CD8-positive, alpha-beta T cell (primary cell): ENCODE measurements at regions of chr5 and their contacts with region 1.

Region 1: DNA sequence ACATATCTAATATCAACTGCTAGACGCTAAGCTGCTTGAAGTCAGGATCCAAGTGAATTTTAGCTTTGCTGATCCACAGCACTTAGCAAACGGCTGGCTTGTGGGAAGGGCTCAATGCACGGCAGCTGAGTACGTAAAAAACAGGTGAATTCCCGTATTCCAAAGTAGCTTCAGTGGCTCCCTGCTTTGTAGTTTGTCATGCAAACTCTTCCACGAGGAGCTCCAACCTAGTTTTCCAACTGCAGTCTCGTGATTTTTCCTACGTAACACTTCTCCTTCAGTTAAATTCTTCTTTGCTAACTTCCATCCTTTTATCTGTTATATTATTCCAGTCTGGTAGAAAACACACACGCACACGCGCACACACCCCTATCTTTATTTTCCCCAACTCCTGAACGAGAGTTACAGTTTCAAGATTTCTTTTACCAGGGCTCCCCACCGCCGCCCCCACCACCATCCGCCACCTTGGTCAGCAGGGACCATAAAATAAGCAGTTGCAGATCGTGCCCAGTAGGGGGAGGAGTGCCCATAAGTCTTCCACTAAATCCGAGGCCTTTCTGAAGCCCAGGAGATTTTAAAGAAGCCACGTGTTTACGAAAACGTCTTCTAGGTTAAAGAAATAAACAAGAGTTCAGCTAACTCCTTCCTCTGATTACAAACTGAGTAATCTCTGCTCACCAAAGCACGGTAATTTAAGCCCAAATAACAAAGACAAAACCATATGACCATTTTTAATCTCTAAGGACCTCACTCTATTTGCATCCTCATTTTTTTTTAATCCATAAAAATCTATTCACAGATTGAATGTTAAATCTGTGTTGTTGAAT is 34.8 kb upstream of the TRIO start:
- DNase-seq: peak in 4 of 9 experiments; percentile 2 to 68 (median 37)
- ATAC-seq: peak; percentile 52
- H3K4me3 ChIP-seq: no peak overlapping the region
- H3K4me3 Mint-ChIP-seq: peak overlapping the region; percentile 29
- H3K27ac ChIP-seq: no peak overlapping the region
- H3K27ac Mint-ChIP-seq: no peak overlapping the region
- H3K4me1 ChIP-seq: no peaks in the 10 kb centered on the region
- H3K4me1 Mint-ChIP-seq: peaks cover 3% of the 10 kb centered on the region
- H3K27me3 ChIP-seq: no peaks in the 10 kb centered on the region
- H3K27me3 Mint-ChIP-seq: peaks cover 15% of the 10 kb centered on the region
- CTCF ChIP-seq: peak; percentile 49

Region 2: DNA sequence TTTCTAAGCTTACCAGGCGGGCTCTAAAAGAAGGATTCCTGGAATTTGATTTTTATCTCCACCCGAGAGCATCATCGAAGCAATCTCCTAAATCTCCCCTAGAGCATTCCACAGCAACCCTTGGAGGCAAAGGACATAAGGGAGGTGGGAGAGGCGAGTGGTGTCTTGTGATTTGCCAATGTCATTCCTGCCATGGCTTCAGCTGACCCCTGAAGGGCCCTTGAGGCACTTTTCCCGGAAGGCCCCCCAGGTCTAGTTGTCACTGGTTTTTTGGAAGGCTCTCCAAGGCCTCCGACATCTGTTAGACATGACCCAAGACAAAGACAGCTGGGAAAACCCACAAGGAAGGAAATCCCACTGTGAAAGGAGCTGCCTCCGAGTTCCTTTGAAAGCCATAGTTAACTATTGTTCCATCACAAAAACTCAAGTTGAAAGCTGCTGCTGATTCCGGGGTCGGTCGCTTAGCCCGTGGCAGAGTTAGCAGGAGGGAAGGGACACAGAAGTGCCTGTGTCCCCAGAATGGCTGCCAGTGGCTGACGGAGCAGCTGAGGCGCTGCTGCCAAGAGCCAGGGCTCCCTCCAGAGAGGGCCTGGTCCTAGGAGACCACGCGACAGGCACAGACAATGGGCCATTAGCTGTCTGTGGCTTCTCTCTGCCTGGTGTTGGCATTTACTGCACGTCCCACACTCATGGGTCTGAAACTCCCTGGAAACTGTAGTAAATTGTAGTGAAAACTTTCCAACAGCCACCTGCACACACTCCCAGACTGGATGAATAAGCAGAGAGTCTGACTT is 10.3 kb after region 1 on chr5:
- CTCF ChIA-PET with region 1: interaction called, 11 read pairs
- POLR2A ChIA-PET with region 1: no interaction called
- intact Hi-C with region 1: no loop called
- DNase-seq: no peak
- ATAC-seq: no peak
- H3K4me3 ChIP-seq: no peak overlapping the region
- H3K4me3 Mint-ChIP-seq: no peak overlapping the region
- H3K27ac ChIP-seq: no peak overlapping the region
- H3K27ac Mint-ChIP-seq: no peak overlapping the region
- H3K4me1 ChIP-seq: no peaks in the 10 kb centered on the region
- H3K4me1 Mint-ChIP-seq: no peaks in the 10 kb centered on the region
- H3K27me3 ChIP-seq: no peaks in the 10 kb centered on the region
- H3K27me3 Mint-ChIP-seq: peaks cover 2% of the 10 kb centered on the region
- CTCF ChIP-seq: no peak

Region 3: DNA sequence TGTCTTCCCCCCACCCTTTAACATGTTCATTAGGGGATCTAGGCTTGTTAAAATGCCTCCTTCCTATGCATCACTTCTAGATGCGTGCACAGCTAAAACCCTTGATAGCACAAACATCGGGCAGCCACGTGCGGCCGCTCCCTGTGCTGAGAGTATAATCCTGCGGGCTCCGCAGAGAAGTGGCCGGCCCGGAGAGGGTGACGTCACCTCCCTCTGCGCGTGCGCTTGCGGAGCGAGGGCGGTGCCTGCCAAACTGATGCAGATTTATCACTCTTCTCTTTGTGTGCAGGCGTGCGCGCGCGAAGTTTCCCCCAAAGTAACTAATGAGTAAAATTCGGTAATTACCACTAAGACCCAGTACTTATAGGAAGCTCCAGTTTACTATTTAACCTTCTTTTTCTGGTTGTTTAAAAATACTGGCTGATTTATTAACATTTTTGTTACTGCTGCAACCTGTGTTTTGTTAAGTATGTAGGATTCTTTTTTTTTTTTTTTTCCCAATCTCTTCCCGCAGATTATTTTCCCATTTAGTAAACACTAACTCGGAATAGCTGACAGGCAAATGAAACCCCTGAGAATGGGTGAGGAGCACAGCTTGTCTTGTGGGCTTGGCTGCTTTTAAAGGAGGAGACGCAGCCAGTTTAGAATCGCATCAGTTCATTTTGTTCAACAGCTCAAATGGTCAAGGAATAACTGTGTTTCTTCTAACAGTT is 156.4 kb after region 1 on chr5:
- CTCF ChIA-PET with region 1: interaction called, 6 read pairs
- POLR2A ChIA-PET with region 1: no interaction called
- intact Hi-C with region 1: loop called in 1 of 2 experiments (anchors 2 kb)
- DNase-seq: peak; percentile 16 to 83 (median 71)
- ATAC-seq: peak; percentile 97
- H3K4me3 ChIP-seq: peak overlapping the region; percentile 6 to 31
- H3K4me3 Mint-ChIP-seq: peak overlapping the region; percentile 62
- H3K27ac ChIP-seq: no peak overlapping the region
- H3K27ac Mint-ChIP-seq: no peak overlapping the region
- H3K4me1 ChIP-seq: peaks cover 6% of the 10 kb centered on the region
- H3K4me1 Mint-ChIP-seq: peaks cover 7% of the 10 kb centered on the region
- H3K27me3 ChIP-seq: no peaks in the 10 kb centered on the region
- H3K27me3 Mint-ChIP-seq: peaks cover 22% of the 10 kb centered on the region
- CTCF ChIP-seq: no peak

Region 4: DNA sequence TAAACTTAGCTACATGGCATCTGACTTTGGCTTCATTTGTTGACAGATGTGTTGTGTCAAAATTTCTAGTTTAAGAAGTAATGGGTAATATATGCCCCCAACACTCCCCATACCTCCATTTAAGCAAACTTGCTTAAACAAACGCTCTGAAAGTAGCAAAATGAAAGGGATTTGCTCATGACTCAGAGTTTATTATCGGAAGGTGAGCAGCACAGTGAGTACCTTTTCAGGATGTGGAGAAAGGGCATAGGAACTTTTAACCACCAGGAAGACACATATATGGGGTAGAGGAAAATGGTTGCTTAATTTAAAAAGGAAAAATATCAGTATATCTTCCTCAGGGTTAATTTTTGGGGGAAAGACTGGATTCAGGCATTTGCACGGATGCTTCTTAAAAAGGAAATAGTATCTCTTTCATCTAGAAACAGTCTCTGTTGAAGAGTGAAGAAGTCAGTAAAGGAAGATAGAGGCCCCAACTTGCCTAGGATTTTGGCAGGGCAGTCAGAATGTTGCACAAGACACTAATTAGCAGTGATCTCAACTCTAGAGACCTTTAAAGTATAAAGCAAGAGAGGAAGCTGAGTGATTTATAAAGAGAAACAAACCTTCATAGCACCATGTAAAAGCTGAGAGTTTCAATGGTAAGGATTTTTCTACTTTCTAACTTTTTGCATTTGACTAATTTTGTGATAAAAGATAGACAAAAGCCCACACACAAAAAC is 189.9 kb after region 1 on chr5:
- CTCF ChIA-PET with region 1: no interaction called
- POLR2A ChIA-PET with region 1: no interaction called
- intact Hi-C with region 1: no loop called
- DNase-seq: no peak
- ATAC-seq: no peak
- H3K4me3 ChIP-seq: no peak overlapping the region
- H3K4me3 Mint-ChIP-seq: no peak overlapping the region
- H3K27ac ChIP-seq: no peak overlapping the region
- H3K27ac Mint-ChIP-seq: no peak overlapping the region
- H3K4me1 ChIP-seq: no peaks in the 10 kb centered on the region
- H3K4me1 Mint-ChIP-seq: no peaks in the 10 kb centered on the region
- H3K27me3 ChIP-seq: no peaks in the 10 kb centered on the region
- H3K27me3 Mint-ChIP-seq: no peaks in the 10 kb centered on the region
- CTCF ChIP-seq: no peak